ENCODE measurements at regions of chrX and their contacts with region 1.

Region 1: GRCh38 chrX:72121383-72121782 is 10.3 kb downstream of the RTL5 start:
- DNase-seq: peak; percentile 64 to 75 (median 72)
- ATAC-seq: peak; percentile 53 to 90 (median 74)
- H3K4me3 ChIP-seq: no peak overlapping the region
- H3K27ac ChIP-seq: peak overlapping the region in 11 of 12 donors; percentile 9 to 88 (median 67)
- H3K4me1 ChIP-seq: peaks cover 0 to 60% (median 33%) of the 10 kb centered on the region in 12 donors
- H3K27me3 ChIP-seq: peaks cover 0 to 29% (median 0%) of the 10 kb centered on the region in 9 donors
- CTCF ChIP-seq: no peak
- POLR2A ChIP-seq: no peak

Region 2: DNA sequence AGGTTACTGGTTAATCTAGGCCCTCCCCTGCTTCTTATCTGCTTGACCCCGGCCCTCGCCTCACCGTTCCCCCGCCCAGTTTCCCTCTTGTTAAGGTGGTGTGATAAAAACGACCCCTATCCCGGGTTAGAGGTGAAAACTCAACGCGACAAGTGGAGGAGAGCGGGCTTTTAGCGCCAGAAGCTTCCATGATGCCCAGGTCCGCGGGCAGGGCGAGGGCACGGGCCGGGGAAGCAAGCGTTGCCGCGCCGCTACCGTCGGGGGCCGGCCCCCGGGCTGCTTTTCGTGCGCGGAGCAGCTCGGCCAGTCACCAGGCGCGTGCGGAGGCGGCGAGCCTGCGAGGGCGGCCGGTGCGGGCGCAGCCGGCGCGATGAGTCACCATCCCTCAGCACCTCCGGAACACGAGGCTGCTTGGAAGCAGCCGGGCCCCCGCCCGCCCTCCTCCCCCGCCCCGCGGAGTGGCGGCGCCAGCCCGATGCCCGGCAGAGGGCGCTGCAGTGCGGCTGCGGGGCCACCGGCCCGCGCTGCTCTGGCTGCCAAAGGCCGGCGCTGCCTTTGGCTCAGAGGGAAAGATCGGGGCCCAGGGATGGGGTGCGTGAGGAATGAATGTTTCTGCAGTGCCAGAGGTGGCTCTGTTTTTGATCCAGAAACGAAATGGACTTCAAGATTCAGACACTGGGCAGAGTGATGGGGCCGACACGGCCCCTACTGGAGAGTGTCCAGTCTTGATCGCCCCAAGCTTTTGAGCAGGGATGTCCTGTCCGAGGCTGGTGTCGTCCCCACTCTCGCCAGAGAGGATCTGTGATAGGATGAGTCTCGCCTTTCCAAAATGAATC is 102.9 kb before region 1 on chrX:
- intact Hi-C with region 1: loop called (anchors 1 to 5 kb)
- DNase-seq: peak; percentile 85 to 92 (median 89)
- ATAC-seq: peak; percentile 90 to 98 (median 98)
- H3K4me3 ChIP-seq: peak overlapping the region in 8 of 12 donors; percentile 12 to 47 (median 32)
- H3K27ac ChIP-seq: peak overlapping the region in 8 of 12 donors; percentile 38 to 80 (median 50)
- H3K4me1 ChIP-seq: peaks cover 0 to 19% (median 4%) of the 10 kb centered on the region in 12 donors
- H3K27me3 ChIP-seq: peaks cover 0 to 38% (median 0%) of the 10 kb centered on the region in 9 donors
- CTCF ChIP-seq: peak; percentile 54 to 86 (median 78)
- POLR2A ChIP-seq: no peak

Region 3: DNA sequence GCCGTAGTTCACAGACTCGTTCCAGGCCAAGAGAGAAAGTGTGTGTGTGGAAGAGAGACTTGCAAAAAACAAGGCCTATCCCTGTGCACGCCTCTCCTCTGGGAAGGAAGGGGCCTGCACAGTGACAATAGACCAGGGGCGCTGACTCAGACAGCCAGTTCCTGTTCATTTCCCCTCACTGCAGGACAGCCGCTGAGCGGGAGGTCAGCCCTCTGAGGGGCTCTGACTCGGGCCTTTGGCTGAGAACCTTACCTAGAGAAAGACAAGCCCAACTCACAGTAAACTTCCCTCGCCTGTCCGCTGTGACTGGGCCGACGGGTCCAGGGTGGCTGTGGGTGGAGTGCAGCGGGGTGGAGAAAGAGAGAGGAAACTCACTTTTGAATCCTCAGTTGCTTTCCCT is 41.8 kb before region 1 on chrX:
- intact Hi-C with region 1: loop called in 2 of 10 experiments (anchors 2 to 5 kb)
- DNase-seq: peak; percentile 57 to 75 (median 62)
- ATAC-seq: peak; percentile 84 to 96 (median 87)
- H3K4me3 ChIP-seq: peak overlapping the region in 11 of 12 donors; percentile 15 to 57 (median 42)
- H3K27ac ChIP-seq: peak overlapping the region; percentile 43 to 81 (median 74)
- H3K4me1 ChIP-seq: peaks cover 0 to 24% (median 7%) of the 10 kb centered on the region in 12 donors
- H3K27me3 ChIP-seq: peaks cover 0 to 33% (median 0%) of the 10 kb centered on the region in 9 donors
- CTCF ChIP-seq: no peak
- POLR2A ChIP-seq: no peak

Measured in heart left ventricle (tissue), 16 donors.